ENCODE measurements at regions of chr15 and their contacts with region 1.

Region 1: DNA sequence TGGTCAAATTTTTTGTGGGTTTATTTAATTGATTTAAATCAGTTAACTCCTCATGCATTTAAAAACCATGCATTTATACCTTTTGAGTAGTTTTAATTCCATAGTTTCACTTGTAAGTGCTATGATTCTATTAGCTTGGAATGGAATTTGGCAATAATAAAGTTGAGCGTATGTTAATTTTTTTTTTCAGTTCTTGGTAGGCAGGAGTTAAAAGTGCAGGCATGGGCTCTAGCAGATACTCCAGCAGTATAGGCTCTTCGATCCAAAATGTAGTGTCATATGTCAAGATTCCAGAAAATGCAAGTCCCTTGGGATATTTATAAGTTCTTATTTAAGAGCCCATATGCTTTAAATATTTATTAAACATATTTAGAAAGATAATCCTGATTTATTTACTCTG is 70.3 kb downstream of the LYSMD4 start:
- DNase-seq: no peak
- H3K4me3 ChIP-seq: no peak overlapping the region
- H3K27ac ChIP-seq: no peak overlapping the region
- H3K4me1 ChIP-seq: peaks cover 0 to 8% (median 0%) of the 10 kb centered on the region in 4 donors
- H3K27me3 ChIP-seq: no peaks in the 10 kb centered on the region
- CTCF ChIP-seq: no peak
- EP300 ChIP-seq: no peak
- POLR2A ChIP-seq: no peak

Region 2: GRCh38 chr15:99578809-99579208 is 84.1 kb before region 1 on chr15:
- in situ Hi-C with region 1: no loop called
- intact Hi-C with region 1: loop called (anchors 1 kb)
- DNase-seq: no peak
- H3K4me3 ChIP-seq: no peak overlapping the region
- H3K27ac ChIP-seq: no peak overlapping the region
- H3K4me1 ChIP-seq: peaks cover 9 to 69% (median 22%) of the 10 kb centered on the region in 4 donors
- H3K27me3 ChIP-seq: no peaks in the 10 kb centered on the region
- CTCF ChIP-seq: no peak
- EP300 ChIP-seq: no peak
- POLR2A ChIP-seq: no peak

Region 3: DNA sequence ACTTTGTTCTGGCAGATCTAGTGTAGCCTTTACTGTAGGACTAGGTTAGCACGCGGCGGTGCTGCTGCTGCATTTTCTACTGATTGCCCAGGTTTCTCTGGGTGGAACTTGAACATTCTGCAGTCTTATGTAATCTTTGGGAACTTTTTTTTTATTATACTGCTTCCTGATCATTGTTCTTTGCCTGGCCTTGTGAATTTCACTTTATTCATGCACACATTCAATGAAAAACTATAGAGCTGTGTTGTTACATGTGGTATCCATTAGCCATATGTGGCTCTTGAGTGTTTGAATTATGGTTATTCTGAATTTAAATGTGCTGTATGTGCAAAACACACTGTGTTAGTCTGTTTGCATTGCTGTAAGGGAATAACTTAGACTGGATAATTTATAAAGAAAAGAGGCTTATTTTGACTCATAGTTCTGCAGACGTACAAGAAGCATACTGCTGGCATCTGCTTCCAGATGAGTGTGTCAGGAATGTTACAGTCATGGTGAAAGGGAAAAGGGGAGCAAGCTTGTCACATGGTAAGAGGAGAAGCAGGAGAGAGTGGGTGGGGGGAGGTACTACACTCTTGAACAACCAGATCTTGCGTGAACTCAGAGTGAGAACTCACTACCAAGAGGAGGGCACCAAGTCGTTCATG is 70.6 kb before region 1 on chr15:
- in situ Hi-C with region 1: loop called in 1 of 4 experiments (anchors 10 kb)
- intact Hi-C with region 1: no loop called
- DNase-seq: no peak
- H3K4me3 ChIP-seq: no peak overlapping the region
- H3K27ac ChIP-seq: no peak overlapping the region
- H3K4me1 ChIP-seq: peaks cover 9 to 41% (median 23%) of the 10 kb centered on the region in 4 donors
- H3K27me3 ChIP-seq: no peaks in the 10 kb centered on the region
- CTCF ChIP-seq: no peak
- EP300 ChIP-seq: no peak
- POLR2A ChIP-seq: no peak

Region 4: DNA sequence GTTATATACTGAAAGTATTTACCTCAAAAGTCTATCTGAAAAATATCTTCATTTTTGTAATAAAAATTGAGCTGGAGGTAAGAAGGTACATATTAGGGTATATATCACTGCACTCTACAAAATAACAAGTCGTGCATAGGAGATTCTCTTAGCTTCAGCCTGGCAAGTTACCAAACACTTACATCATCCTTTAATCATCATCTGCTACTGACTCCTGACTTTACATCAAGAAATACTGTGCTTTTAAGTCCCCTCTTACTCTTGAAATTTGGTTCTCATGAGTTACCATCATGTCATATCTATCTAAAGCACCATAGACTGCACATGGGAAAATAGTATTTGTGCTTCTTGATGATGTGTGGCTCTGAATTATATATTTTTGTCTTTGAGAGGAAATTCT is 19.6 kb after region 1 on chr15:
- in situ Hi-C with region 1: no loop called
- intact Hi-C with region 1: no loop called
- DNase-seq: no peak
- H3K4me3 ChIP-seq: no peak overlapping the region
- H3K27ac ChIP-seq: peak overlapping the region in 2 of 4 donors; percentile 4 to 9
- H3K4me1 ChIP-seq: peaks cover 0 to 5% (median 0%) of the 10 kb centered on the region in 4 donors
- H3K27me3 ChIP-seq: no peaks in the 10 kb centered on the region
- CTCF ChIP-seq: no peak
- EP300 ChIP-seq: no peak
- POLR2A ChIP-seq: no peak